ENCODE measurements at regions of chr7 and their contacts with region 1.

Region 1: DNA sequence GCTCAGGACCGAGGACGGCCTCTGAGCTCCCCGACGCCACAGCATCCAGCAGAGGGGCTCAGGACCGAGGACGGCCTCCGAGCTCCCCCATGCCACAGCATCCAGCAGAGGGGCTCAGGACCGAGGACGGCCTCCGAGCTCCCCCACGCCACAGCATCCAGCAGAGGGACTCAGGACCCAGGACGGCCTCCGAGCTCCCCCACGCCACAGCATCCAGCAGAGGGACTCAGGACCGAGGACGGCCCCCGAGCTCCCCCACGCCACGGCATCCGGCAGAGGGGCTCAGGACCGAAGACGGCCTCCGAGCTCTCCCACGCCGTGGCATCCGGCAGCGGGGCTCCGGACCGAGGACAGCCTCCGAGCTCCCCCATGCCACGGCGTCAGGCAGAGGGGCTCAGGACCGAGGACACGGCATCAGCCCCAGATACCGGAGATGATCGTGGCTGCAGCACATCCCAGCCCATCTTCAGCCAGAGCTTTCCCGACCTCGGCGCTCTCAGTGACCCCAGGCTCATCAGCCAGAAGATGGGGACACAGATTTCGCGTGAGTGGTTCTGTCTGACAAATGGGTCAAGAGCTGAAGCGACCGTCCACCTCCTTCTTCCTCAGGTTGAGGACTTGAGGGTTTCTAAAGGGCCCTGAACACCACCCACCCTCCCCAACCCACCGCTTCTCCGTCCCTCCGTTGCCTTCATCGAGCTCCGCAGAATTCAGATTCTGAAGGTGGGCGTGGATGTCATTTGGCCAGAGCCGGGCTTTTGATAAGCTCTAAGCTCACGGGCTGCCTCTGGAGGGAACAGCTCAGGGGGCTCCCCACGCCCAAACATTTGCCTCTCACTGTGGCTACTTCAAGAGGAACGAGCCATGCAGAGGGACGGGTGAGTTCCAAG is 55.8 kb upstream of the DNAAF5 start:
- DNase-seq: no peak
- H3K4me3 ChIP-seq: no peak overlapping the region
- H3K27ac ChIP-seq: no peak overlapping the region
- H3K4me1 ChIP-seq: no peaks in the 10 kb centered on the region
- H3K27me3 ChIP-seq: no peaks in the 10 kb centered on the region
- CTCF ChIP-seq: no peak

Region 2: DNA sequence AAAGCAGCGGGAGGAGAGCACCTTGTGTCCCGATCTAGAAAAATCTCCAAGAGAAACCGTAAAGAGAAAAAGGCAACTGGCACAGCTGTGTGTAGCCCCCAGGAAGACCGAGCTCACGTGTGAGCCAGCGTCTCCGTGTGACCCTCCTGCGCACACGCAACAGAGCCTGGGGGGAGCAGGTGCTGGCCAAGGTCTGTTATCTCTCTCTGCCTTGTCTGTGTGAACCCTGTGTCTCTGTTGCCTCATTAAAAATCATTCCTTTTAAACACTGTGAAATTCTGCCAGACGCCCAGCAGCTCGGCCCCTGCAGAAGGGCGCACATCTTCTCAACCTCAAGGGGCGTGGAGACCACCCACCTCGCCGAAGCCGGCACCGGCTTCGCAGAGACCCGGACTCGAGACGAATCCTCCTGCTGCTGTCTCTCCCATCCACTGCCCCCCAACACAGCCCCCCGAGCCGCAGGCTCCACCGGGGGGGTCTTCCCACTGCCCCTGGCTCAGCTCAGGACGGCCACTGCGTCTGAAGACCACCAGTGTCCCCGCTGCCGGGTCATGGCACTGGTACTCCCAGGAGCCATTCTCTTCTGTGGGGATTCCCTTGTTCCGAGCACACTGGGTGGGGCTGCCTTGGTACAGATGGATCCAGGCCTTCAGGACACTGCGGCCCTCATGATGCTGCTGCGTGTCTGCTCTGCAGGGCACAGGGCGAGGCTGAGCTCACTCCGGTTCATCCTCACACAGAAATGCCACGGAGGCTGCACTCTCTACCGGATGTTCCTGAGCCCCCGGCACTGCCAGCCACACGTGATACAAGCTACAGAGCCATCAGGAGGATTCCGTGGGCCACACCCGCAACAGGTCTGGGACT is 38.5 kb before region 1 on chr7:
- CTCF ChIA-PET with region 1: no interaction called
- POLR2A ChIA-PET with region 1: no interaction called
- intact Hi-C with region 1: no loop called
- DNase-seq: no peak
- H3K4me3 ChIP-seq: no peak overlapping the region
- H3K27ac ChIP-seq: no peak overlapping the region
- H3K4me1 ChIP-seq: no peaks in the 10 kb centered on the region
- H3K27me3 ChIP-seq: no peaks in the 10 kb centered on the region
- CTCF ChIP-seq: no peak

Region 3: GRCh38 chr7:683526-684205 is 12.9 kb after region 1 on chr7:
- CTCF ChIA-PET with region 1: no interaction called
- POLR2A ChIA-PET with region 1: interaction called, 17 read pairs
- intact Hi-C with region 1: no loop called
- DNase-seq: no peak
- H3K4me3 ChIP-seq: no peak overlapping the region
- H3K27ac ChIP-seq: no peak overlapping the region
- H3K4me1 ChIP-seq: no peaks in the 10 kb centered on the region
- H3K27me3 ChIP-seq: no peaks in the 10 kb centered on the region
- CTCF ChIP-seq: no peak